Lower leg skin (tissue), 4 donors: ENCODE measurements at regions of chr17 and their contacts with region 1.

Region 1: DNA sequence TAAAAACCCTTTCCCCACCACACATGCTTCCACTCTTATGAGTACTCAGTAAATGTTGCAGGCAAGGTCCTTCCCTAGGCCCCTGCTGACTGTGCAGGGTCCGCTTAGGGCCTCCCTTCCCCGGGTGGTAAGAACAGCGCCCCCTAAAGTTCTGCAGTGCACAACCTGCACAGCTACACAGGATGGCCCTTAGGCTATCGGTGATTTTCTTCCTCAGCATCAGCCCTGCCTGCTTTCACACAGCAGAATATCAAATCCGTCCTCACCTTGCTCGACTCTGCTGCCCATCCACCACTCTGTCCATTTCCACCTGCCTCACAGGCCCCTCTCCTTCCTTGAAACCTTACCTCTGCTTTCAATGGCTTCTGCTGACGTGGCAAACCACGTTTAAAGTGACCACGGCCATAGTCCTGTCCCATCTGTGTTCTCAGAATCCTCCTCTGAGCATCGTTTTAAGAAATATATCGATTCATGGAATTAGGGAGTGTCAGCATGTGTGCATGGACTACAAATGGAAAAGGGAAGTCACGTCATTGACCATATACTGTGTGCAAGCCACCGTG is 51.4 kb upstream of the TMEM132E start:
- DNase-seq: no peak
- H3K4me3 ChIP-seq: no peak overlapping the region
- CTCF ChIP-seq: no peak
- POLR2A ChIP-seq: no peak

Region 2: DNA sequence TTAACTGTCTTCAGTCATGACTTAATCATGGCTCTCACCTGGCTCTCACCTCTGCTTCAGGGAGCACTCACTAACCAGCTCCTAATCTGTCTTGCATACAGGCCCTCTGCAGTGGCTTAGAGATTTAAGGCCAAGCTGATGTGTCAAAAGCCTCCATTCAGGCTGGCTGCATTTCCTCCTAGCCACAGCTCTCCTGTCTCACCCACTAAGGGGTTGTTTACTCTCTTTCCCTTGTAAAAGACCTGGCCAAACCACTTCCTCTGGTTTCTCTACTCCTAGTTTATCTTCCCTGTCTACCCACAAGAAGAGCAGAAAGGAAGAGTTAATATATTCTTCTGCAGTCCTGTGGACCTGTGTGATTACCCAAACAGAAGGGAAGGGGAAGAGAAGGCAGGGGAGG is 1225.6 kb before region 1 on chr17:
- intact Hi-C with region 1: loop called (anchors 10 kb)
- DNase-seq: peak in 1 of 2 donors; percentile 12
- H3K4me3 ChIP-seq: no peak overlapping the region
- CTCF ChIP-seq: no peak
- POLR2A ChIP-seq: no peak

Region 3: DNA sequence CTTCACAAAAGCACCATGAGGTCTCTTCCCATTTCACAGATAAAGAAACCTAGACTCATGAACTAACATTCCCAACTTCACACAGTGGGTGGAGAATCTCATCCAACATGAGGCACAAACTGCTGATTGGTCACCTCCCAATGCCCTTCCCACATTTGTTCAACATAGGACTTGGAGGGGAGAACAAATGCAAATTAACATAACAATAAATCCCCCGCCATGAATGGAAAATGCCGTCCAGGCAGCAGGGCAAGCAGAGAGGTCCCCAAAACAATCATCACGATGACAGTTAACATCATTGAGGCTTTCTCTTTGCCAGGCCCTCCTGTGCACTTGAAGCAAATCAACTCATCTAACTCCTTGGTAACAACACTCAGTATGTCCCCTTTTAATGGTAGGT is 236.7 kb after region 1 on chr17:
- intact Hi-C with region 1: no loop called
- DNase-seq: peak in 1 of 2 donors; percentile 28
- H3K4me3 ChIP-seq: no peak overlapping the region
- CTCF ChIP-seq: no peak
- POLR2A ChIP-seq: no peak